Ovary (tissue), 10 donors: ENCODE measurements at regions of chr9 and their contacts with region 1.

Region 1: GRCh38 chr9:70229579-70229978 is 29.2 kb upstream of the SMC5 start:
- DNase-seq: no peak
- H3K4me3 ChIP-seq: no peak overlapping the region
- H3K27ac ChIP-seq: no peak overlapping the region
- H3K4me1 ChIP-seq: peaks cover 5% of the 10 kb centered on the region
- H3K27me3 ChIP-seq: no peaks in the 10 kb centered on the region
- CTCF ChIP-seq: peak; percentile 36 to 44 (median 44)
- EP300 ChIP-seq: no peak
- POLR2A ChIP-seq: no peak

Region 2: GRCh38 chr9:70120834-70121510 is 108.6 kb before region 1 on chr9:
- intact Hi-C with region 1: loop called in 1 of 4 experiments (anchors 10 kb)
- DNase-seq: peak; percentile 48 to 79 (median 65)
- H3K4me3 ChIP-seq: no peak overlapping the region
- H3K27ac ChIP-seq: peak overlapping the region in 1 of 2 donors; percentile 16
- H3K4me1 ChIP-seq: peaks cover 10% of the 10 kb centered on the region
- H3K27me3 ChIP-seq: no peaks in the 10 kb centered on the region
- CTCF ChIP-seq: peak in 1 of 3 donors; percentile 37
- EP300 ChIP-seq: no peak
- POLR2A ChIP-seq: no peak

Region 3: GRCh38 chr9:70297141-70297540 is 67.6 kb after region 1 on chr9:
- intact Hi-C with region 1: loop called in 1 of 4 experiments (anchors 10 kb)
- DNase-seq: no peak
- H3K4me3 ChIP-seq: no peak overlapping the region
- H3K27ac ChIP-seq: no peak overlapping the region
- H3K4me1 ChIP-seq: no peaks in the 10 kb centered on the region
- H3K27me3 ChIP-seq: no peaks in the 10 kb centered on the region
- CTCF ChIP-seq: no peak
- EP300 ChIP-seq: no peak
- POLR2A ChIP-seq: no peak

Region 4: DNA sequence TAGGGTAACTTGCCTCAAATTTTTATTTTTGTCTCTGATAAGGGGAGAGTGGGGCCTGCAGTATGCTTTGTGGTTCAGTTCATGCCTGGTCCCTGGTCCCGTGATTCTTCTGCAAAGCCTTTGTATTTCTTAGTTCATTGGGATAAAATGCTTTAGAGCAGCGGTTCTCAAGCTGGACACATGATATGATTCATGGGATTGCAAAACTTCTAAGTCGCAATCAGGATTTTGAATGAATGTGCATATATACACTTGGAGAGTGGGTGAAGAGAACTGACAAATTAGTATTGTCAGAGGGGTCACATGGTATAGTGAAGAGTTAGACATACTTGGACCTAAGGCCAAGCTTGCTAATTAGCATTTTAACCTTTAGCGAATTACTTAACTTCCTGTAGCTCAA is 450.3 kb after region 1 on chr9:
- intact Hi-C with region 1: no loop called
- DNase-seq: no peak
- H3K4me3 ChIP-seq: no peak overlapping the region
- H3K27ac ChIP-seq: no peak overlapping the region
- H3K4me1 ChIP-seq: peaks cover 11% of the 10 kb centered on the region
- H3K27me3 ChIP-seq: no peaks in the 10 kb centered on the region
- CTCF ChIP-seq: no peak
- EP300 ChIP-seq: no peak
- POLR2A ChIP-seq: no peak